Adrenal gland (tissue), 19 donors: ENCODE measurements at regions of chr2 and their contacts with region 1.

Region 1: DNA sequence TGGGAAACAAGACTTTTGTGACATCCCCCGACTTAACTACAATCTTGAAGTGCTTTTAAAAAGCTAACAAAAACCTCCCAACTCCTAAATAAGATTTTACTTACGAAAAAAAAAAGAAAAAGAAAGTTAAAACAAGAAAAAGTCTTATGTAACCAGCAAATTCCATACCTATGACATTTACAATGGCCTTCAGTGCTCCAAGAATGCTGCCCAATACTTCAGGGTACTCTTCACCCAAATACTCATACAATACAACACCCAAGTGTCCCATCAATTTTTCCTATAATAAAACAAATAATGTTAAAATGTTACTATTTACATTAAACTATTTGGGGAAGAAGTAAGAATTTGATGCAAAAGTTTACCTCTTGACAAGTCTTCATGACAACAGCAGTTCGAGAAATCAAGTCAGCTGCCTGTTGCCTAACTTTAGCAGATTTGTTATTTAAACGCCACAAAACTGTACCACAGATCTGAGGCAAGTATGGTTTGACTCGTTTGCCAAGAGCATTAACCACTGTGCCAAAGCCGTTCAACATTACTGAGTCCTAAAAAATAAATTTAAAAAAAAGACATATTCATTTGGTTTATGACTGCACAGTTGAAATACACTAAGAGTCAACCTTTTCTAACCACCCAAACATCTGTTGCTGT is 34.8 kb downstream of the SF3B1 start:
- DNase-seq: no peak
- H3K4me3 ChIP-seq: no peak overlapping the region
- H3K27ac ChIP-seq: peak overlapping the region in 1 of 5 donors; percentile 2
- H3K4me1 ChIP-seq: no peaks in the 10 kb centered on the region
- H3K27me3 ChIP-seq: no peaks in the 10 kb centered on the region
- CTCF ChIP-seq: no peak
- POLR2A ChIP-seq: no peak

Region 2: DNA sequence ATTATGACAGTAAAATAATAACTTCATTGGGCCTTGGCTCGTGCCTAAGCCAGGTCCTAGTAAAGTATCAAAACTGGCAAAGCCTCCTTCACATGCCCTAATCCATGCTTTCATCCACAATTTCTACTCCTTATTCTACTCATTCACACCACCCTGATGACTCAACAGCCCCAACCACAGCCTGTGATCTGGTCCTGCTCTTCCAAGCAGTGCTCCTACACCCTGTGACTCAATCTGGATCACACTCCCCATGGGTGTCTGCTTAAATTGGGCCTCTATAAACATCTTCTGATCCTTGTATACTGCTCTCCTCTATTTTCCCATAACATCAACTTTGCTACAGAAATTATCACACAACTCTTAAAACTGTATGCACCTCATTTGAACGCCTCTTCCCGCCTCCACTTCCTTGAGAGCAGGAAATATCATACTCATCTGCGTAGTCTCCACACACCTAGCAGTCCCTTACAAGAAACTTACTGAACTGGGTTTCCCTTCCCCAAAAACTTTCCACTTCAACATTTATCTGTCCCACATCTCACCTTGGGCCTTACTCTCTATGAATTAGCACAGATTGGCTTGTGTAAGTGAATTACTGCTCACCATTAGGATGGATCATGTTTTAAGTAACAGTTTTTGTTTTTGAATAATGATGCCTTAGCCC is 616.5 kb before region 1 on chr2:
- intact Hi-C with region 1: loop called in 1 of 2 experiments (anchors 10 kb)
- DNase-seq: no peak
- H3K4me3 ChIP-seq: no peak overlapping the region
- H3K27ac ChIP-seq: no peak overlapping the region
- H3K4me1 ChIP-seq: no peaks in the 10 kb centered on the region
- H3K27me3 ChIP-seq: no peaks in the 10 kb centered on the region
- CTCF ChIP-seq: no peak
- POLR2A ChIP-seq: no peak

Region 3: GRCh38 chr2:197461057-197461456 is 61.0 kb after region 1 on chr2:
- intact Hi-C with region 1: loop called (anchors 5 to 10 kb)
- DNase-seq: no peak
- H3K4me3 ChIP-seq: no peak overlapping the region
- H3K27ac ChIP-seq: no peak overlapping the region
- H3K4me1 ChIP-seq: peaks cover 5 to 33% of the 10 kb centered on the region in 2 donors
- H3K27me3 ChIP-seq: no peaks in the 10 kb centered on the region
- CTCF ChIP-seq: no peak
- POLR2A ChIP-seq: no peak

Region 4: GRCh38 chr2:197497326-197497725 is 97.3 kb after region 1 on chr2:
- intact Hi-C with region 1: no loop called
- DNase-seq: no peak
- H3K4me3 ChIP-seq: peak overlapping the region in 1 of 4 donors; percentile 68
- H3K27ac ChIP-seq: peak overlapping the region in 4 of 5 donors; percentile 92 to 99 (median 97)
- H3K4me1 ChIP-seq: peaks cover 31 to 57% of the 10 kb centered on the region in 2 donors
- H3K27me3 ChIP-seq: no peaks in the 10 kb centered on the region
- CTCF ChIP-seq: no peak
- POLR2A ChIP-seq: no peak